ENCODE measurements at regions of chr10 and their contacts with region 1.

Region 1: DNA sequence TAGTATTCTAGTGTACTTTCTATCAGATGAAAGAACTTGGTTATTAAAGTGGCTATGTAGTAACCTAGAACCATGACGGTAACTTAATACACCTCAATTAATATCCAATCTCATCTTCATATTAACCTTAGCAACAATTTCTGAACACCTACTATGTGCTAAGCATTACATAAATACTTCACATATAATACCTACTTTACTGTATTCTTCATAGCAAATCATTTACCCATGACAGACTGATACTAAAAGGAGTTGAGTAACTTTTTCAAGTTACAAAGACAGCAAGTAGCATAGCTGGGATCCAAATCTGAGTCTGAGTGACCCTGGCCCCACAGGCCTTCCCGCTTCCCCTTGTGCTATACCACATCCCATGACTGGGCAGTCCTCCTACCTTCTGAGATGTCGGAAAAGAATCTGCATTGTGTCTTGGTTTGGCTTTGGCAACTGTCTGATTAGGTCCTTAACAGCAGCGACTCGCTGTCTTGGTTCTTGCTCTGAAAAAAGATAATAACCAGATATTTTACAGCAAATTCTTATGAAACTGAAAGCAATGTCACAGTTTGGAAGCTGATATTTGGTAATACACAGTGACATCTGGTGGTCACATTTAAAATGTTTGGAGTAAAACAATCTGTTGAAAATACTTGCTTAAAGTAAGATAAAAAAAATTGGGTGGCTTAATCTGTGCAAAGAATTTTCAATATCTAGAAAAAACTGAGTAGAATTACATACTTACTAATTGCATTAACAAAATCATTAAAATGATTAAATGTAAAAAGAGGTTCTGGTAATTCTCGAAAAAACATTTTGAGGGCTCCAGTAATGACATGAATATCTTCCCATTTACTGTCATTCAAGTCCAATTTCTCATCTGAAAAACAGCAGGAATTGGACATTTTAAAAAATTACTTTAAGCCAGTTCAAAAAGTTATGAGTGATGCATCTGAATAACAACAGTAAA is 120.1 kb downstream of the ARHGAP12 start:
- DNase-seq: peak; percentile 49
- ATAC-seq: peak; percentile 96
- H3K4me3 ChIP-seq: no peak overlapping the region
- H3K27ac ChIP-seq: peak overlapping the region; percentile 77
- H3K4me1 ChIP-seq: peaks cover 3% of the 10 kb centered on the region
- H3K27me3 ChIP-seq: no peaks in the 10 kb centered on the region
- CTCF ChIP-seq: peak; percentile 27 to 59 (median 42); a peak in 5 of 6 replicates
- EP300 ChIP-seq: no peak
- POLR2A ChIP-seq: no peak
- RAD21 ChIP-seq: peak; percentile 78

Region 2: DNA sequence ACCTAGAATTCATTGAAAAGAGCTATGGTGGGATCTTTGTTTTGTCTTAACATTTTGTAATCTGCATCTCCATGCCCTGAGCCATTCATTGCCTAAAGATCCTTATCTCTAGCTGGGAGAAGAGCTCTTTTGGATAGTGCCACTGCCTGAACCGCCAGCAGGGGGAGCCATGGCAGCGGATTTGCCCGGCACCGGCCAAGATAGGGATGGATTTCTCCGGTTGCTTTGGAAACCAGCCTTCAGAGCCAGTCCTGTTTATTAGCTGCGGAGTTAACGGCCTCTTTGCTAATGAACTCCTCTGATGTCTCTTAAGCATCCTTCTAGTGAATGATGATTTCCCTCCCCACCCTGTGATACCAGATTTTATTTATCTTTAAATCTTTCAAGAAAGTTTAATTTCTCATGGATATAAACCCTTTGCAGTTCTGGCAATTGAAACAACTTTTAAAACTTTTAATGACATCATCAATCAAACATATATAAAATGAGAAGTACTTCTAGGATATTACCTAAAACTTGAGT is 1120.8 kb before region 1 on chr10:
- CTCF ChIA-PET with region 1: interaction called, 10 read pairs
- POLR2A ChIA-PET with region 1: no interaction called
- RAD21 ChIA-PET with region 1: interaction called, 9 read pairs
- SMC1A ChIA-PET with region 1: interaction called, 4 read pairs
- in situ Hi-C with region 1: no loop called
- intact Hi-C with region 1: no loop called
- DNase-seq: no peak
- ATAC-seq: peak; percentile 97
- H3K4me3 ChIP-seq: no peak overlapping the region
- H3K27ac ChIP-seq: no peak overlapping the region
- H3K4me1 ChIP-seq: peaks cover 5% of the 10 kb centered on the region; the same call in 1 of the 2 replicates
- H3K27me3 ChIP-seq: no peaks in the 10 kb centered on the region
- CTCF ChIP-seq: peak; percentile 88 to 93 (median 89)
- EP300 ChIP-seq: no peak
- POLR2A ChIP-seq: no peak
- RAD21 ChIP-seq: peak; percentile 90

Region 3: GRCh38 chr10:30728786-30729185 is 1079.8 kb before region 1 on chr10:
- CTCF ChIA-PET with region 1: interaction called, 10 read pairs
- POLR2A ChIA-PET with region 1: no interaction called
- RAD21 ChIA-PET with region 1: interaction called, 6 read pairs
- SMC1A ChIA-PET with region 1: interaction called, 5 read pairs
- in situ Hi-C with region 1: no loop called
- intact Hi-C with region 1: loop called (anchors 1 kb)
- DNase-seq: no peak
- ATAC-seq: no peak
- H3K4me3 ChIP-seq: no peak overlapping the region
- H3K27ac ChIP-seq: no peak overlapping the region
- H3K4me1 ChIP-seq: peaks cover 8% of the 10 kb centered on the region
- H3K27me3 ChIP-seq: no peaks in the 10 kb centered on the region
- CTCF ChIP-seq: no peak
- EP300 ChIP-seq: no peak
- POLR2A ChIP-seq: no peak
- RAD21 ChIP-seq: no peak

Region 4: DNA sequence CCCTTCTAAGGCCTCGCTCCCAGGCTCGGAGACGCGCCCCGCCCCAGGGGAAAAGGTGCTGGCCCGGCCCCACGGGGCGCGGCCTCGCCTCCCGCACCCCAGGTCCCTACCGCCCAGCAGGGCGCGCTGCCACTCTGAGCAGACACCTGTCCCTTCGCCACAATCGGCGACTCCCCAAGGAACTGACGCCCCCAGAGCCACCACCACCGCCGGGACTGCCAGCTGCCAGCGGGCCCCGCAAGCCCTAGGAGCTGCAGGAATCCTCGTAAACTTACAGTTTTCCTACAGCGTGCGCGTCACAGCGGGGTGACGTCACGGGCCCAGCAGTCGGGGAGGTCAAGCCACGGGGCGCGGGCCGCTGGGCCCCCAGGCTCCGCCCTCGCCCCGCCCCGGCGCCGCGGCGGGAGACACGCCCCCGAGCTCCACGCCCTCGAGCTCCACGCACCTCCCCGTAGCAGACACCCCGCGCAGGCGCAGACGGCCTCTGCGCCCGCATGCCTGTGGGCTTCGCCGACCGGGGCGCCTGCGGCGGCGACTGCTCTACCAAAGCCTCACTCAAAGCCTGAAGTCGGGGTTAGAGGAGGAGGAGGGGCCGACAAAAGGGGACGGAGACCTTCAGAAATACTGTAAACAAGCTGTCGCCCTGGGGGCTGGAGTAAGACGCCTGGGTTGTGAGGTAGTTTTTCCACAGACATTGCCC is 776.8 kb before region 1 on chr10 and contains the start of gene ZNF438:
- CTCF ChIA-PET with region 1: interaction called, 12 read pairs
- POLR2A ChIA-PET with region 1: interaction called, 4 read pairs
- RAD21 ChIA-PET with region 1: interaction called, 3 read pairs
- SMC1A ChIA-PET with region 1: interaction called, 5 read pairs
- in situ Hi-C with region 1: no loop called
- intact Hi-C with region 1: loop called (anchors 1 kb)
- DNase-seq: peak; percentile 68
- ATAC-seq: peak; percentile 90
- H3K4me3 ChIP-seq: peak within 1 kb of the TSS; percentile 75
- H3K27ac ChIP-seq: peak within 1 kb of the TSS; percentile 97
- H3K4me1 ChIP-seq: peaks cover 2% of the 10 kb centered on the region; the same call in 1 of the 2 replicates
- H3K27me3 ChIP-seq: no peaks in the 10 kb centered on the region
- CTCF ChIP-seq: peak; percentile 69 to 80 (median 71)
- EP300 ChIP-seq: peak in 1 of 2 experiments; percentile 64; a peak in 1 of 4 replicates
- POLR2A ChIP-seq: peak; percentile 79
- RAD21 ChIP-seq: peak; percentile 39; the same call in 1 of the 2 replicates
- polyA plus RNA-seq, gene ZNF438: 0.93 to 0.99 TPM

Region 5: DNA sequence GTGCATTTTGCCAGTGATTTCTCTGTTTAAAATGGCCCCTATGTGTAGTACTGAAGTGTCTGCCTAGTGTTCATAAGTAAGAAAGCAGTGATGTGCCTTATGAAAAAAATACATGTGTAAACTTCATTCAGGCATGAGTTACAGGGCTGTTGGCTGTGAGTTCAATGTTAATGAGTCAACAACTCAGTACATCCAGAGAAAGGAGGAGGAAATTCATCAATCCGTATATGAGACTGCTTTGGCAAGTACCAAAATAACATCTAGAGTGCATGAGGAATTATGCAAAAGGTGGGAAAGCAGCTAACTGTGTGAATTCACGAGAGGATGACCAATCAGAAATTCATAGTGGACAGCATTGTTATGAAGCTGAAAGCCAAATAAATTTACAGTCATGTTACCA is 234.0 kb before region 1 on chr10:
- CTCF ChIA-PET with region 1: no interaction called
- POLR2A ChIA-PET with region 1: no interaction called
- RAD21 ChIA-PET with region 1: no interaction called
- SMC1A ChIA-PET with region 1: no interaction called
- in situ Hi-C with region 1: no loop called
- intact Hi-C with region 1: no loop called
- DNase-seq: no peak
- ATAC-seq: no peak
- H3K4me3 ChIP-seq: no peak overlapping the region
- H3K27ac ChIP-seq: no peak overlapping the region
- H3K4me1 ChIP-seq: no peaks in the 10 kb centered on the region
- H3K27me3 ChIP-seq: no peaks in the 10 kb centered on the region
- CTCF ChIP-seq: no peak
- EP300 ChIP-seq: no peak
- POLR2A ChIP-seq: no peak
- RAD21 ChIP-seq: no peak

Region 6: GRCh38 chr10:31603235-31604087 is 205.1 kb before region 1 on chr10:
- CTCF ChIA-PET with region 1: no interaction called
- POLR2A ChIA-PET with region 1: no interaction called
- RAD21 ChIA-PET with region 1: no interaction called
- SMC1A ChIA-PET with region 1: no interaction called
- in situ Hi-C with region 1: no loop called
- intact Hi-C with region 1: loop called (anchors 5 kb)
- DNase-seq: peak; percentile 66
- ATAC-seq: peak; percentile 99
- H3K4me3 ChIP-seq: peak overlapping the region; percentile 66
- H3K27ac ChIP-seq: no peak overlapping the region
- H3K4me1 ChIP-seq: peaks cover 9% of the 10 kb centered on the region
- H3K27me3 ChIP-seq: no peaks in the 10 kb centered on the region
- CTCF ChIP-seq: no peak
- EP300 ChIP-seq: no peak
- POLR2A ChIP-seq: peak; percentile 71
- RAD21 ChIP-seq: no peak

Region 7: DNA sequence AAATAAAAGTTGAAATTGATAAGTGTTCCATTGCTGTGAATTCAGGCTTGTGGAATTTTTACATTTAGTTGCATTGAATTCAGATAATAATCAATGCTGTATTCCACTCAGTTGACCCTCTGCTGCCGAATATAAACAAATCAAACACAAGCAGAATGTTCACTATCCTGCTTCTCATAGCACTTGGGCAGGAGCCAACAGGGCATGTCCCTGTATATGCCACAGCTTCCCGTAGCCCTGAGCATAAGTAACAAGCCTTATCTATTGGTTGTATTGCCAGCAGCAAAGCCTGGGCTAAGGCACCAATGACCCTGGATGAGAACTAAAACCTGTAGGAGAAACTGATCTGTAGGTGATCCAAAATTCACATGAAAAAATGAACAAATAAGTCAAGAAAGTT is 25.8 kb before region 1 on chr10:
- CTCF ChIA-PET with region 1: no interaction called
- POLR2A ChIA-PET with region 1: no interaction called
- RAD21 ChIA-PET with region 1: no interaction called
- SMC1A ChIA-PET with region 1: no interaction called
- in situ Hi-C with region 1: no loop called
- intact Hi-C with region 1: no loop called
- DNase-seq: no peak
- ATAC-seq: no peak
- H3K4me3 ChIP-seq: no peak overlapping the region
- H3K27ac ChIP-seq: no peak overlapping the region
- H3K4me1 ChIP-seq: no peaks in the 10 kb centered on the region
- H3K27me3 ChIP-seq: no peaks in the 10 kb centered on the region; a peak in 1 of 4 replicates
- CTCF ChIP-seq: no peak
- EP300 ChIP-seq: no peak
- POLR2A ChIP-seq: no peak
- RAD21 ChIP-seq: no peak

Region 8: DNA sequence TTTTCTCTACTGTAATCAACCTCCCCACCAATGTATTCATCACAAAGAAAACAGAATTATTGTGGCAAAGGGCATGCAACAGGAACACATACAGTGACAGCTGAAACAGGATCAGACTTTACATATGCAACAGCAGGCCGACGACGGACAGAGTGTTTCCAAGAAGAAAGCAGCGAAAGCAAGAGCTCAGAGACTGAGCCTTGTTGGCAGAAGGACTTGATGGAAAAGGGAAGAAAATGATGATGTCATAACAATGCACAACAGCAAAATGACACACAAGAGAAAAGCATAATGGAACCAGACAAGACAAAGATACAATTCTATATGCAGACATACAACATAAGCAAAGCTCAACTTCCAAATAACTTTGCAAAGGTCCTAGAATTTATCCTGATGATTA is 13.6 kb after region 1 on chr10:
- CTCF ChIA-PET with region 1: interaction called, 11 read pairs
- POLR2A ChIA-PET with region 1: no interaction called
- RAD21 ChIA-PET with region 1: no interaction called
- SMC1A ChIA-PET with region 1: interaction called, 4 read pairs
- in situ Hi-C with region 1: no loop called
- intact Hi-C with region 1: no loop called
- DNase-seq: no peak
- ATAC-seq: no peak
- H3K4me3 ChIP-seq: no peak overlapping the region
- H3K27ac ChIP-seq: no peak overlapping the region
- H3K4me1 ChIP-seq: no peaks in the 10 kb centered on the region
- H3K27me3 ChIP-seq: no peaks in the 10 kb centered on the region
- CTCF ChIP-seq: no peak
- EP300 ChIP-seq: no peak
- POLR2A ChIP-seq: no peak
- RAD21 ChIP-seq: no peak

Measured in GM12878 (cell line).